ENCODE measurements at regions of chr6 and their contacts with region 1.

Region 1: DNA sequence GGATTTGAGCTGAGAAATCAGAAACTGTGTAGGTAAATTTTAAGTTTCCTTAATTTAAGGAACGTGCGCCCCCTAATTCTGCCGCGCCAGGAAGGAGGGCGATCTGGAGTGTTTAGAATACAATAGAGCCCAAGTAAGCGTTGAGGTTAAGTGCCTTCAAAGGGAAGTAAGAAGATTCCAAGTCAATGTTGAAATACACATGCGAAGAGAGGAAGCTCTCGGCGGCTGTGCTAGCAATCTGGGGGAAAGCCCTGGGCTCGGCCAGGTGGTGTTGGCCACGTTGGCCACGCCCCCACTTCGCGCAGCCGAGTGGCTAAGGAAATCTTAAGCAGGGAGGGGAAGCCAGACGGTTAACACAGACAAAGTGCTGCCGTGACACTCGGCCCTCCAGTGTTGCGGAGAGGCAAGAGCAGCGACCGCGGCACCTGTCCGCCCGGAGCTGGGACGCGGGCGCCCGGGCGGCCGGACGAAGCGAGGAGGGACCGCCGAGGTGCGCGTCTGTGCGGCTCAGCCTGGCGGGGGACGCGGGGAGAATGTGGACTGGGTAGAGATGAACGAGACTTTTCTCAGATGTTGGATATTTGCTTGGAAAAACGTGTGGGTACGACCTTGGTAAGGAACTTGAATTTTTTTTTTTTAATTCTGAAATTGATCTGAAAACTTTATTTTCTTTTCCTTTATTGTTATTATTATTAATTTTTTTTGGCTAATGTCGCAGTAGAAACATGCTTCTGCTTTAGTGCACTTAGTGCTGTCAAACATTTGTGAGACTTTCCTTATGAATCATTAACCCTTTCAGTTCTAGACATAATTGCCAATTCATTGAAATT is at the start of gene PRDM1:
- DNase-seq: no peak
- H3K4me3 ChIP-seq: peak within 1 kb of the TSS; percentile 68
- CTCF ChIP-seq: no peak

Region 2: DNA sequence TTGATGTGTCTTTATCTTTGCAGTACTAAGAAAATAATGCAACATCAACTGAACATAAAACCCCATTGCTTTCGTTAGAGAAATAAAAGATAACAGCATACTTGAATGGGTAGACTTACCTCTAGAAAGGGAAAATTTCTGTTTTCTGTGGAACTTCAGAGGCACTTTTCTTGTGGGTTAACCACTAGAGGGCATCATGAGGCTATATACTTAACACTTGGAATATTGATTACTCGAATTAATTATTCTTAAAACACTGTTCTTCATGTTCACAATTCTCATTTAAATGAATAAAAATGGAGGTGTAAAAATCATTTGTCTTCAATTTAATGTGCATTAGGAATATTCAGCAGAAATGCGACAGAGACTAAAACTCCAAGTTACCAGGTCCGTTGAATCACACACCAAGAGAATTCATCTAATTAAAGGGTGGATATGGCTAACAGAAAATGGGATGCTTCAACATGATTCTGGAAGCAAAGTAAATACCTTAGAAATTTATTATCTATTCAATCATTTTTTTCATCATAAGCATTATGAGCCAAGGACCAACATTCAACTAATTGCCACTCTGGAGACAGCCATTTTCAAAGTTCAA is 352.5 kb before region 1 on chr6:
- CTCF ChIA-PET with region 1: interaction called, 14 read pairs
- POLR2A ChIA-PET with region 1: no interaction called
- DNase-seq: no peak
- H3K4me3 ChIP-seq: no peak overlapping the region
- CTCF ChIP-seq: peak; percentile 23

Region 3: GRCh38 chr6:106104941-106105340 is 18.7 kb after region 1 on chr6:
- CTCF ChIA-PET with region 1: no interaction called
- POLR2A ChIA-PET with region 1: no interaction called
- DNase-seq: no peak
- H3K4me3 ChIP-seq: no peak overlapping the region
- CTCF ChIP-seq: no peak